Body of pancreas (tissue), 4 donors: ENCODE measurements at regions of chr1 and their contacts with region 1.

Region 1: DNA sequence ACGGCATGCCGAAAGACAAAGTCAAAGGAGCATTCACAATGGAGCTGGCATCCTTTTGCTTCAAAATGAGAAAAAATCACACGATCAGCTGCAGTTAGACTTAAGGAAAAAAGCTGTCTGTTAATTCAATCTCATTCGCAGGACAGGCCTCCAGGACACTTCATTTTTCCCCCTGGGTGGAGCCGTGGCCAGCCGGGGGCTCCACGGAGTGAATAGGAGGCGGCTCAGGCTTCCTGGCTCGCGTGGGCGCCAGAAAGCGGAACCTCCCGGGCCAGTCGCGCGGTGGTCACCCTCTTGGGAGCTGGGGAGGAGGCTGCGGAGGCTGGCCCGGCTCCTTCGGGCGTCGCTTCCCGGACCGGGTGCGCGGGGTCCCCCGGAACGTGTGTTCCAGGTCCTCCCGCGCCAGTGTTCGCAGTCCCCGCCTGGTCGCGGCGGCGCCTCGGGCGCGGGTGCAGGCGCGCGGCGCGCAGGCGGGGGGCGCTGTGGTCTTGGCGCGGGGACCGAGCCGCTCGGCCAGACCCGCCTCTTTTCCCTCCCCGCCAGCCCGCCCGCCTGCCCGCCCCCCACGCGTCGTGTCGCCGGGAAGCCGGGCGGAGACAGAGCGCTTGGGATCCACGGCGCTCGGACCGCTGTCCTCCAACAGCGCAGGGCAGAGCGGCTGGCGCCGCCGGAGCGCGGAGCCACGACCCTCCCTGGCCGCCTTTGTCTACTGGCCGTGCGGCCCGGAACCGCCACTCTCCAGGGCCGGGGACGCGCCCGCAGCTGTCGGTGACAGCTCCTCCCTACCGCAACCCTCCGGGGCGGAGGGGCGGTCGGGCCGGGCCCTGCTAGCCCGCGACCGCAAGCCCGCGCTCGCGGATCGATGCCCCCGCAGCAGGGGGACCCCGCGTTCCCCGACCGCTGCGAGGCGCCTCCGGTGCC is at the start of gene RHOU:
- DNase-seq: peak; percentile 77 to 83 (median 82)
- ATAC-seq: peak; percentile 89
- H3K4me3 ChIP-seq: peak within 1 kb of the TSS; percentile 18 to 58
- H3K27ac ChIP-seq: peak within 1 kb of the TSS; percentile 70 to 94 (median 91)
- H3K4me1 ChIP-seq: peaks cover 37% of the 10 kb centered on the region
- H3K27me3 ChIP-seq: no peaks in the 10 kb centered on the region
- CTCF ChIP-seq: peak; percentile 47 to 99 (median 96)
- POLR2A ChIP-seq: peak; percentile 77 to 87 (median 81)
- total RNA-seq, gene RHOU: 6.9 to 9.3 TPM

Region 2: GRCh38 chr1:229148041-229148671 is 413.0 kb after region 1 on chr1:
- intact Hi-C with region 1: loop called (anchors 10 kb)
- DNase-seq: peak; percentile 58 to 86 (median 71)
- ATAC-seq: peak; percentile 91
- H3K4me3 ChIP-seq: no peak overlapping the region
- H3K27ac ChIP-seq: peak overlapping the region; percentile 4 to 63 (median 54)
- H3K4me1 ChIP-seq: peaks cover 14% of the 10 kb centered on the region
- H3K27me3 ChIP-seq: no peaks in the 10 kb centered on the region
- CTCF ChIP-seq: peak in 1 of 7 experiments; percentile 2
- POLR2A ChIP-seq: no peak